HEK293 (cell line): ENCODE measurements at regions of chr11 and their contacts with region 1.

Region 1: DNA sequence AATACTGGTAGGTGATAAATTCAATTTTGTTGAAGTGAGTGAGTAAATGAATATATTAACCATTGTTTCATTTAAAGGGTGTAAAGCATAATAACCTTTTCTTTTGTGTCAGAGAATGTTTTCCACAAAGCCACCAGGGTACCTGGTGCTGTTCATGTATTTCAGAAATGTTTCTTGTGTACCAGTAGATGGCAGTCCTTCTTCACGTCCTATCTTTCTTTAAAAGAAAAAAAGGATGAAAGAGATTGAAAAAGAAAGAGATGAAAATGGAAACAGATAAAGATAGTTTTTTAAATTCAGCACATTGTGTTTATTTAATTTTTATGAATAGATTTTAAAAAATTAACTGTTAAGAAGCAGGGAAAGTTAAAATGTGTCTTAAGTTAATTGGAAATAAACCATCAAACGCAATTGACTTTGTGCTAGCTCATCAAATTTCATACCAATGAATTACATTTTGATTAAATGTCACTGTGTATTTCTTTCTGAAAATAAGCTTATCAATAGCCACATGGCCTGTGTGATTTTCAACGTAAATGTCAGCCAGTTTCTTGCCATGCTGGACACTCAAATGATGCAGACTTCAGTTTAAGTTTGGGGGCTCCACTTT is 65.5 kb upstream of the CHORDC1 start:
- H3K4me3 ChIP-seq: no peak overlapping the region
- H3K27ac ChIP-seq: no peak overlapping the region
- H3K4me1 ChIP-seq: no peaks in the 10 kb centered on the region
- CTCF ChIP-seq: 0 out of 2 replicates have a peak, but pooled peaks have one; percentile 10

Region 2: GRCh38 chr11:90310210-90310609 is 21.9 kb after region 1 on chr11:
- CTCF ChIA-PET with region 1: interaction called, 11 read pairs
- POLR2A ChIA-PET with region 1: no interaction called
- H3K4me3 ChIP-seq: no peak overlapping the region
- H3K27ac ChIP-seq: no peak overlapping the region
- H3K4me1 ChIP-seq: no peaks in the 10 kb centered on the region
- CTCF ChIP-seq: no peak

Region 3: DNA sequence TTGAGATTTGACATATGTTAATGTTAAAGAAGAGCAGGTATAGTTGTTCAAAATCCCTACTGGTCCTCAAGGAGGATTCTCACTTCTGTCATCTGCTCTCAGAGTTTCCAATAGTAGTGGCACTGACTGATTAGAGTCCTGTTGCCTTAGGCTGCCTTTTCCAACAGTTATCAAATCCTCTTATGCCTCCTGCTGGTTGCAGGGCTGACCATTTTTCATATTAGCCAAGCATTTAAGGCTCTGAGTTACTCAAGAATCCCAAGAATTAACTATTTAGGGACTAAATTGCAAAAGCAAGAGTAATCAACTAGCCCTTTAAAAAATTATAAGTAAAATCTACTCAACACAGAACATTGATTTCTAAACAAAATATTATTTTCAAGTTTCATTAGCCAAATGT is 146.5 kb after region 1 on chr11:
- CTCF ChIA-PET with region 1: interaction called, 17 read pairs
- POLR2A ChIA-PET with region 1: no interaction called
- H3K4me3 ChIP-seq: no peak overlapping the region
- H3K27ac ChIP-seq: no peak overlapping the region
- H3K4me1 ChIP-seq: no peaks in the 10 kb centered on the region
- CTCF ChIP-seq: no peak

Region 4: DNA sequence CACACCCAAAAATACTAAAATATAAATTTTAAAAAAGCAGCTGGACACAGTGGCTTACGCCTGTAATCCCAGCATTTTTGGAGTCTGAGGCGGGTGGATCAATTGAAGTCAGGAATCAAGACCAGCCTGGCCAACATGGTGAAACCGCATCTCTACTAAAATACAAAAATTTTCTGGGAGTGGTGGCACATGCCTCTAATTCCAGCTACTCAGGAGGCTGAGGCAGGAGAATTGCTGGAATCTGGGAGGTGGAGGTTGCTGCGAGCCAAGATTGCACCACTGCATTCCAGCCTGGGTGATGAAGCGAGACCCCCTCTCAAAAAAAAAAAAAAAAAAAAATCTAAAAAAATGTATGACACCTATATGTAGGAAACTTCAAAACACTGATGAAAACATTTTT is 177.2 kb after region 1 on chr11:
- CTCF ChIA-PET with region 1: interaction called, 13 read pairs
- POLR2A ChIA-PET with region 1: no interaction called
- H3K4me3 ChIP-seq: no peak overlapping the region
- H3K27ac ChIP-seq: no peak overlapping the region
- H3K4me1 ChIP-seq: no peaks in the 10 kb centered on the region
- CTCF ChIP-seq: no peak